Heart left ventricle (tissue), 16 donors: ENCODE measurements at regions of chr1 and their contacts with region 1.

Region 1: GRCh38 chr1:212879947-212880690 is 22.0 kb downstream of the FLVCR1 start:
- DNase-seq: no peak
- ATAC-seq: no peak
- H3K4me3 ChIP-seq: no peak overlapping the region
- H3K27ac ChIP-seq: no peak overlapping the region
- H3K4me1 ChIP-seq: no peaks in the 10 kb centered on the region
- H3K27me3 ChIP-seq: no peaks in the 10 kb centered on the region
- CTCF ChIP-seq: no peak
- POLR2A ChIP-seq: no peak

Region 2: GRCh38 chr1:212805767-212806166 is 74.4 kb before region 1 on chr1:
- intact Hi-C with region 1: no loop called
- DNase-seq: no peak
- ATAC-seq: no peak
- H3K4me3 ChIP-seq: no peak overlapping the region
- H3K27ac ChIP-seq: no peak overlapping the region
- H3K4me1 ChIP-seq: no peaks in the 10 kb centered on the region
- H3K27me3 ChIP-seq: no peaks in the 10 kb centered on the region
- CTCF ChIP-seq: no peak
- POLR2A ChIP-seq: no peak

Region 3: GRCh38 chr1:213008564-213008963 is 128.4 kb after region 1 on chr1:
- intact Hi-C with region 1: loop called in 1 of 10 experiments (anchors 10 kb)
- DNase-seq: no peak
- ATAC-seq: no peak
- H3K4me3 ChIP-seq: no peak overlapping the region
- H3K27ac ChIP-seq: no peak overlapping the region
- H3K4me1 ChIP-seq: peaks cover 0 to 12% (median 0%) of the 10 kb centered on the region in 12 donors
- H3K27me3 ChIP-seq: no peaks in the 10 kb centered on the region
- CTCF ChIP-seq: no peak
- POLR2A ChIP-seq: no peak